Astrocyte of the cerebellum (primary cell): ENCODE measurements at regions of chr17 and their contacts with region 1.

Region 1: DNA sequence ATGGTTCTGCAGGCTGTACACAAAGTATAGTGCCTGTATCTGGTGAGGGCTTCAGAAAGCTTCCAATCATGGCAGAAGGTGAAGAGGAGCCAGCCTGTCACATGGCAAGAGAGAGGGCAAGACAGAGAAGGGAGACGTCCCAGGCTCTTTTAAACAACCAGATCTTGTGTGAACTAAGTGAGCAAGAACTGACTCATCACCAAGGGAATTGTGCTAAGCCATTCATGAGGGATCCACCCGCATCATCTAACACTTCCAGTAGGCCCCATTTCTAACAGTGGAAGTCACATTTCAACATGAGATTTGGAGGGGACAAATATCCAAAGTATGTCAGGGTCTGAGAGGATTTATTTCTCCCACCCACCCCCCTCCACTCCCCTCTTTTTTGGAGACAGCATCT is 56.2 kb upstream of the ELAC2 start:
- DNase-seq: no peak
- H3K4me3 ChIP-seq: no peak overlapping the region
- CTCF ChIP-seq: no peak

Region 2: DNA sequence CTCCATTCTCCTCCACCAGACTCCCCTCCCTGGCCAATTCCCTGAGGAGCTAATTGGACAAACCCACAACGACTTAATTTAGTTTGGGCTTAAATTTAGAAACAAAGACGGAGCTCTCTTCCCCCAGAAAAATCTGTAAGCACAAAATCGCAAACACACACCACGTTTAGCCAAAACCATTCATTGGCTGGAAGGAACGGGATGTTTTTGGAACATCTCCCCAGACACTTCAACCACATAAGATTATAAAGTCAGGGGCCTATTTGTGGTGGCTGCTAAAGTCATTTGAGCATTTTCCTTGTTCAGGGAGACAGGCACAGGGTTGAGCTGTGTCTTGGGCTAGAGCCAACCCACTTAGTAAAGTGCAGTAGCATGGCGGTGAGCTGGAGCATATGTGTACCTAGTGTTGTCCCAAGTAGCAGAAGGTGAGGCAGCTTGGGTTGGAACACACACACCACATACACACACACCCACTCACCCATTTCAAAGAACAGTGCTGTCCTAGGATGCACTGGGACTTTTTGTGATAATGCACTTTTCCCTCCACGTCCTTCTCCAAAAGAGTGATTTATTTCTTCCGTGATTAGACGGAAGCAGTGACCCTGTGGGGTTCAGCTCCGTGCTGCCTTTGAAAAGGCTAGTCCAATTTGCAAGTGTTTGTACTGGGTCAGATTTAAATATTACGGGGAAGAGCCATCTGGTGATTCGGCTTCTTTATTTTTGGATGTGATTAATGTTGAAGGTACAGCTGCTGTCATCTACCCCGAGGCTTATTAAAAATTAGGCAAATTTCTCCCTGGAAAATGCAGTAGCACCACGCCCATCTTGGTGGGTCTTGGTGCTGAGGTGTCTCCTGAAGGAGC is 88.4 kb before region 1 on chr17:
- in situ Hi-C with region 1: no loop called
- DNase-seq: peak; percentile 53
- H3K4me3 ChIP-seq: no peak overlapping the region
- CTCF ChIP-seq: no peak

Region 3: GRCh38 chr17:13002766-13003451 is 71.1 kb before region 1 on chr17:
- in situ Hi-C with region 1: no loop called
- DNase-seq: peak; percentile 73
- H3K4me3 ChIP-seq: no peak overlapping the region
- CTCF ChIP-seq: peak; percentile 80

Region 4: GRCh38 chr17:13044572-13045065 is 29.4 kb before region 1 on chr17:
- in situ Hi-C with region 1: no loop called
- DNase-seq: no peak
- H3K4me3 ChIP-seq: no peak overlapping the region
- CTCF ChIP-seq: no peak

Region 5: GRCh38 chr17:13160296-13160695 is 86.3 kb after region 1 on chr17:
- in situ Hi-C with region 1: loop called (anchors 5 kb)
- DNase-seq: no peak
- H3K4me3 ChIP-seq: no peak overlapping the region
- CTCF ChIP-seq: no peak